Psoas muscle (tissue), 8 donors: ENCODE measurements at regions of chr12 and their contacts with region 1.

Region 1: DNA sequence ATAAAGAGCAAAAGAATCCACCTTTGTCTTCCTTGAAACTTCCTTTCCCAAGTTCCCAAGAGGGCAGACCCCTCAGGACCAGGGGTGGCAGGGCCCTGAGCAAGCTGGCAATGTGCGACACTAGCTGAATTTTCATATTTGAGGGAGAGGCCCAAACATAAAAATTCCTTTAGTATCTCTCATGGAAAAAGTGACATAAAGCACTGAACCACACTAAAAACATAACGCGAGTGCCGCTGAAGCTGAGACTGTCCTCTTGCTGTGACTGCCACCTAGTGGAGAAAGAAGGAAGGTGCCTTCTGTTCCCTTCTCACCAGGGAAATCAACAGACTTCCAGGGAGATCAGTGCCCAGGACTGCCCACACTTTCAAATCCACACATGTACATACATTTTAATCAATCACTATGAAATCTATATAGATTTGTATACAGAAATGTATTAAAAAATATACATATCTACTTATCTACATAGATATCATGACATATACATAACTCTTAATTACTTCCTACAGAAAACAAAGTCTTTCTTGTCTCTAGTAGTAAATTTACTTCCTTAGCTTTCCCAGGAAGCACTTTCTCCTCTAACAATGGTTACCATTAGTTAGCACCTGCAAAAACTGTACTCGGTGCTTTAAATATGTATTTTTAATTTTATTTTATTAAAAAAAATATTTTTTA is 53.8 kb downstream of the SSH1 start:
- DNase-seq: peak in 1 of 2 donors; percentile 60
- ATAC-seq: peak; percentile 58 to 78 (median 70)
- H3K4me3 ChIP-seq: peak overlapping the region; percentile 47
- H3K27ac ChIP-seq: peak overlapping the region; percentile 91
- H3K4me1 ChIP-seq: peaks cover 58% of the 10 kb centered on the region
- H3K27me3 ChIP-seq: no peaks in the 10 kb centered on the region
- CTCF ChIP-seq: peak; percentile 97

Region 2: GRCh38 chr12:108562348-108563135 is 241.0 kb before region 1 on chr12 and contains the start of gene ISCU:
- intact Hi-C with region 1: loop called (anchors 2 to 10 kb)
- DNase-seq: peak; percentile 99
- ATAC-seq: peak; percentile 87 to 90 (median 88)
- H3K4me3 ChIP-seq: peak within 1 kb of the TSS; percentile 76
- H3K27ac ChIP-seq: peak within 1 kb of the TSS; percentile 97
- H3K4me1 ChIP-seq: peaks cover 55% of the 10 kb centered on the region
- H3K27me3 ChIP-seq: no peaks in the 10 kb centered on the region
- CTCF ChIP-seq: no peak
- total RNA-seq, gene ISCU: 148 to 225 (median 212) TPM

Region 3: GRCh38 chr12:108664338-108665258 is 139.0 kb before region 1 on chr12:
- intact Hi-C with region 1: loop called (anchors 1 kb)
- DNase-seq: peak; percentile 75 to 85
- ATAC-seq: peak; percentile 91 to 95 (median 92)
- H3K4me3 ChIP-seq: no peak overlapping the region
- H3K27ac ChIP-seq: peak overlapping the region; percentile 86
- H3K4me1 ChIP-seq: peaks cover 58% of the 10 kb centered on the region
- H3K27me3 ChIP-seq: no peaks in the 10 kb centered on the region
- CTCF ChIP-seq: peak; percentile 94

Region 4: GRCh38 chr12:108773798-108774788 is 29.5 kb before region 1 on chr12:
- intact Hi-C with region 1: no loop called
- DNase-seq: peak; percentile 85 to 94
- ATAC-seq: peak; percentile 69 to 94 (median 92)
- H3K4me3 ChIP-seq: no peak overlapping the region
- H3K27ac ChIP-seq: peak overlapping the region; percentile 78
- H3K4me1 ChIP-seq: peaks cover 31% of the 10 kb centered on the region
- H3K27me3 ChIP-seq: no peaks in the 10 kb centered on the region
- CTCF ChIP-seq: no peak

Region 5: DNA sequence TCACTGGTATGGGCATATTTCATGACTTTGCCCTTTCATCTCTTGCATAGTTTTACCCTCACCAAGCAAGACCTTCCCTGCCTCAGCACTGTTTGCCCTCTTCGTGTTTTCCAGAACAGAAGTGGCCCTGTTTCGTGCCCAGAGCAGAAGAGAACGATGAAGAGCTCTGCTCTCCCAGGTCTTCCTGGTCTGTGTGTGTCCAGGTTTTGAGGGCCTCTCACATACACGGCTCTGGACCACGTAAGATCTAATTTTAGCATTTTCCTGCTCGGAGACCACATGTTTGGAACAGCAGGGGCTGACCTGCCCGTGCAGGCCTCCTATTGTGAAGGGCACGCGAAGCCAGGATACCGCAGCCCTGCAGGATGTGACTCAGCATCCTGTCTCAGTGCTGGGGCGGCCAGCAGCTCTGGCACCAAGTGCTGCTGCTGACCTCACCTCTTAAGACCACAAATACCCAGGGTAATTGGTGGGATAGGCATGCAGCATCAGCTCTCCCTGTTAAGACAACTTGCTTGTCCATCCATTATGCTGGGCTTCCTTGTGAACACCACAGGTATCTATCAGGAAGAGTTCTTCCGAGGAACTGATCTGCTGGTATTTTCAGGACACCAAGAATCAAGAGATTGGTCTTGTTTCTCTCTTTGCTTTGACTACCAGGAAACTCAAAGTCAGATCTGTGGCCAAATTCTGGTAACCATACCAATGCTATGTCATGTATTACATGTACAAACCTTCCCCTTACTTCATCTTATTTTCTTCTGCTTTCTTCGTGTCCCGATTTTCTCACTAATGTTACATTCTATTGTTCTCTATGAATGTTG is 34.8 kb after region 1 on chr12:
- intact Hi-C with region 1: no loop called
- DNase-seq: peak; percentile 92 to 95
- ATAC-seq: peak; percentile 94 to 95 (median 94)
- H3K4me3 ChIP-seq: peak overlapping the region; percentile 24
- H3K27ac ChIP-seq: peak overlapping the region; percentile 97
- H3K4me1 ChIP-seq: peaks cover 81% of the 10 kb centered on the region
- H3K27me3 ChIP-seq: no peaks in the 10 kb centered on the region
- CTCF ChIP-seq: no peak

Region 6: DNA sequence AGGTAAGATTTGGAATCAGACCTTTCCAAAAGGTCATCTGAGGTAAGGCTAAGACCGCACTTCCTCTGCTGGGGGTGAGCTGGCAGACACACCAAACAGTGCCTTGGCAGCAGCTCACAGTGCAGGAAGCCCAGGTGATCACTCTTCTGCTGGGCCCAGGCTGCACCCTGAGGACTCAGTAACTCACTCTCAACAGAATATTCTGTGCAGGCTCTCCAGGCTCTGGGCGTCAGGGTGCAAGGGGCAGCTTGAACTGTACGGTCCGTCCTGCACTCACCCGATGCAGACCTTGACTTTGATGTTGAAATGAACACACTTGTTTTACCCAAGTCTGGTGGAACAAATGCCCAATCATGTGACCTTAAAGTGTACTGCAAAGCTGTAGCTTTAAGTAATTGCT is 283.7 kb after region 1 on chr12:
- intact Hi-C with region 1: loop called in 1 of 2 experiments (anchors 5 kb)
- DNase-seq: no peak
- ATAC-seq: peak in 3 of 4 donors; percentile 31 to 47 (median 46)
- H3K4me3 ChIP-seq: no peak overlapping the region
- H3K27ac ChIP-seq: no peak overlapping the region
- H3K4me1 ChIP-seq: peaks cover under 1% of the 10 kb centered on the region
- H3K27me3 ChIP-seq: no peaks in the 10 kb centered on the region
- CTCF ChIP-seq: no peak